Posterior vena cava (tissue), 2 donors: ENCODE measurements at regions of chr2 and their contacts with region 1.

Region 1: GRCh38 chr2:220277445-220278007 is 650.1 kb downstream of the SLC4A3 start:
- DNase-seq: peak; percentile 87

Region 2: DNA sequence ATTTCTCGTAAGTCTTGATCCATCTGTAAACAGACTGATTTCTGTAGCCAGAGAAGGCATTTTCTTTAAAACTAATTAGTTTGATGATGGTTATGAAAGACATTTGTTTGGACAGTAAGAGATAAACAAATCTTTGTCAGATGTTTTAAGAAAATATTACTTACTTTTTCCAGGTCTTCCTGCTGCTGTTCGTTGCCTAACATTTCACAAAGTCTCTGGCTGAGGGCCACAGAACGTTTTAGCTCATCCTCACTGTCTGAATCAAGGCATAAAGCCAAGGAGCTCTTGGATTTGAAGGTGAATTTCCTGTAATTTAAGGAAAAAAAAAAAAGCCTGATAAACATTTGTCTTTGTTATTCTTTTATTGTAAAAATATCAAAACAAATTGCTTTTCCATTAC is 1800.8 kb before region 1 on chr2:
- intact Hi-C with region 1: no loop called
- DNase-seq: no peak

Region 3: GRCh38 chr2:220198920-220199319 is 78.6 kb before region 1 on chr2:
- intact Hi-C with region 1: no loop called
- DNase-seq: no peak

Region 4: DNA sequence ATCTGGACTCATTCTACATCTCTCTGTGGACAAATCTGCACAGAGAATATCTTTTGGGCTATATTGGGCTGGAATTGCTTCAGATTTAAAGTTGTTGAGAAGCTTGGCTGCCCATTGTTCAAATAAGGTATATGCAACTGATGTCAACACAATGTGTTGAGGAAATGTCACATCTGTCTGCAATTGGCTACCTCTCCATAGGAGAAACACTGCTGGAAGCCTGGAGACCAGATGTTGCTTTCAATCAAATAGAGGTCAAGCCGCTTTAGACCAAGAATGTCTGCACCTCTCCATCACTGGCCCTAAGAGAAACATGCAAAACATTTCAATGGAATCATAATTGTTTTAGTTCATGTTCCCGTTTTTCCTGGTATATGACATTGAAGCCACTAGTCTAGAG is 70.1 kb after region 1 on chr2:
- intact Hi-C with region 1: loop called in 1 of 2 experiments (anchors 2 kb)
- DNase-seq: no peak

Region 5: DNA sequence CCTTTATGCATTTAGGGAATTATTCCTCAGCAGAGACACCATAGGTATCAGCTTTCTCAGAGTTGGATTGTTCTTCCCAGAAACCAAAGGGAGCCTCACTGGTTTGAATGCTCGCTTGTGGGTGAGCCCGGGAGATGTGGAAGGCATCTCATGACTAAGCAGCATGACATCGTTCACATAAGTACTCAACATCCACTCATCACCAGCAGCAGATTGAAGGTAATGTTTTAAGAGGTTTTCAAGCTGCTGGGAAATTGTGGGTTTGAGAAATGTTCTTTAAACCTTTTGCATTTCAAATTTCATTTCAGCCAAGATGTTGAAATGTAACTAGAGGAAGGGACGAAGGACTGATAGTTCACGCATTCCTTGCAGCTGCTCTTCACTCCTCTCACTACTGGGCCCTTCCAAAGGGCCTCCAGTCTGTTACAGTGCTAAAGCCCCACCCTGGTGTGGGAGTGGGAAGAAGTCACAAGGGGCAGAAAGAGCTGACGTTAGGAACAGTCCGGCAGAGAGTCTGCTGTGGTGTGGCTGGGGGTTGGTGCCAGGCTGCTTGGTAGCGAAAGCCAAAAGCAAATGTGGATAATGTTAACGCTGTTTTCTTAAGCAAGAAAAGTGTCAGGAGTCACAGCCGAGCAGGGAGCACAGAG is 1619.1 kb after region 1 on chr2:
- intact Hi-C with region 1: loop called in 1 of 2 experiments (anchors 5 kb)
- DNase-seq: peak; percentile 87